PC-3 (cell line): ENCODE measurements at regions of chr5 and their contacts with region 1.

Region 1: DNA sequence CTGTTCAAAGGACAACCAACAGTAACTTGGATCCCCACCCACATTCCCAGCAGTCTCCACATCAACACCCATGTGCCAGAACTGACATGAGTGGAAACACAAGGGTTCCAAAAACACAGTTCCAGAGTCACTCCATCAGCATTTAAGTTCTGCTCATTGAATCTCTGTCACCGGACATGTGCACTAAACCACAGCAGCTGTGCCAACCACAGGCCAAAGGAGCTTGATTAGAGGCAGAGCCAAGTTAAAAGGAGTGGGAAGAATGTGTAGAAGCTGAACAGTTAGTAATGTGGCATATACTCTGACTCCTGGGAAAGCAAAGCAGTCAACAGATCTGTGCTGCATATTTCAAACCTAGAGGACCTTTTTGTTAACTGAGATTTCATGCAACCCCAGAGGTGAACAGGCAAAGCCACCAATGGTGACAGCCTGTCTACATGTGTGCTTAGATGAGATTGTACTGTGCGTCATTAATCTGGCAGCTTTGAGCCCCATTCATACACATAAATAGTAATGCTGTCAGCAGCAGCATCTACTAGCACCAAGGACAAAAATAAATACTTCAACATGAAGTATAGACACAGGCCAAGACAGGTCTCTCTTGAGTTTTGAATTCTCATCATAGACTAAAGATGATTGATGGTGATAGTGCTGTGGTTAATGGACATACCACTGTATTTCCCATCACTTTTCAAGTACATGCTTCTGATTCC is 16.4 kb upstream of the FST start:
- DNase-seq: no peak
- ATAC-seq: no peak
- H3K4me3 ChIP-seq: no peak overlapping the region
- H3K27ac ChIP-seq: no peak overlapping the region
- H3K4me1 ChIP-seq: peaks cover 3% of the 10 kb centered on the region
- H3K27me3 ChIP-seq: no peaks in the 10 kb centered on the region
- CTCF ChIP-seq: no peak

Region 2: GRCh38 chr5:53397845-53398244 is 66.2 kb before region 1 on chr5:
- CTCF ChIA-PET with region 1: no interaction called
- POLR2A ChIA-PET with region 1: no interaction called
- intact Hi-C with region 1: loop called (anchors 2 kb)
- DNase-seq: peak; percentile 88
- ATAC-seq: peak; percentile 90
- H3K4me3 ChIP-seq: no peak overlapping the region
- H3K27ac ChIP-seq: peak overlapping the region; percentile 84
- H3K4me1 ChIP-seq: peaks cover 15% of the 10 kb centered on the region
- H3K27me3 ChIP-seq: no peaks in the 10 kb centered on the region
- CTCF ChIP-seq: no peak